ENCODE measurements at regions of chr22 and their contacts with region 1.

Region 1: DNA sequence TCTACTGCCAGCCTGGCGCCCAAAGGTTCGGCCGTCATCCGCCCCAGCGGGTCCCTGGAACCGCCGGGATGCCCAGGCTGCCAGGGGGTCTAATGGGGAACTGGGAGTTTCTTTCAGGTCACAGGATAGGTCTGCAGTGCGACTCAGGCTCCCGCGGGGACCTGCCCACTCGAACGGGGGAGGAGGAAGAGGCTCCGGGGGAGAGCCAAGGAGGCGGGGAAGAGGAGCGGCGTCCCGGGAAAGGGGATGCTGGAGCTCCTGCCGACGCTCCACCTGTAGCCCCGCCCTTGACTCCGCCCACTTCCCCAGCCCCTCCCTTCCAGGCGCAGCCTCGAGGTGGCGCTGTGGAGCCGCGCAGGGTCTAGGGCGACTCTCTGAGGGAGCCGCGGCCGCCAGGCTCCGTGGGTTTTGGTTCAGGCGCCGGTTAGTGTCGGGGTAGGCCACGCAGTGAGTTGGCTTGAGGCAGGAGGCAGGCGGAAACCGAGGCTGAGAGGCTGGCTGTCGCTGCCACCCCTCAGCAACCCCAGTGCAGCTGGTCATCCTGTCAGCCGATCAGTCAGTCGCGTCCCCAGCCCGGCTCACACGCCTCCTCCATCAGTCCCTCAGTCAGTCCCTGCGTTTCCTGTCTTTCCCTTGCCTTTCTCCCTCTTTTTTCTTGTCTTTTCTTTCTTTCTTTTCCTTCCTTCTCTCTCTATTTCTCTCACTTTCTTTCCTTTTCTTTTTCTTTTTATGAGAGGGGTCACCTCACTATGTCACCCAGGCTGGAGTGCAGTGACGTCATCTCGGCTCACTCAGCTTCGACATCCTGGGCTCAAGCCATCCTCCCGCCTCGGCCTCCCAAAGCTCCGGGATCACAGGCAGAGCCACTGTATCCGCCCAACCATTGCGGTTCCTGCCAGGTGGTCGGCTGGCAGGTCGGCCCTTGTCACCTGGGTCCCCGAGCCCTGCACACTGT is 26.4 kb downstream of the YWHAH start:
- DNase-seq: peak; percentile 72 to 89 (median 84)
- H3K4me3 ChIP-seq: peak overlapping the region in 2 of 4 donors; percentile 17 to 41
- H3K27ac ChIP-seq: peak overlapping the region in 1 of 5 donors; percentile 36
- H3K4me1 ChIP-seq: peaks cover 0 to 9% of the 10 kb centered on the region in 2 donors
- H3K27me3 ChIP-seq: no peaks in the 10 kb centered on the region
- CTCF ChIP-seq: peak; percentile 65 to 91 (median 86)
- POLR2A ChIP-seq: no peak

Region 2: DNA sequence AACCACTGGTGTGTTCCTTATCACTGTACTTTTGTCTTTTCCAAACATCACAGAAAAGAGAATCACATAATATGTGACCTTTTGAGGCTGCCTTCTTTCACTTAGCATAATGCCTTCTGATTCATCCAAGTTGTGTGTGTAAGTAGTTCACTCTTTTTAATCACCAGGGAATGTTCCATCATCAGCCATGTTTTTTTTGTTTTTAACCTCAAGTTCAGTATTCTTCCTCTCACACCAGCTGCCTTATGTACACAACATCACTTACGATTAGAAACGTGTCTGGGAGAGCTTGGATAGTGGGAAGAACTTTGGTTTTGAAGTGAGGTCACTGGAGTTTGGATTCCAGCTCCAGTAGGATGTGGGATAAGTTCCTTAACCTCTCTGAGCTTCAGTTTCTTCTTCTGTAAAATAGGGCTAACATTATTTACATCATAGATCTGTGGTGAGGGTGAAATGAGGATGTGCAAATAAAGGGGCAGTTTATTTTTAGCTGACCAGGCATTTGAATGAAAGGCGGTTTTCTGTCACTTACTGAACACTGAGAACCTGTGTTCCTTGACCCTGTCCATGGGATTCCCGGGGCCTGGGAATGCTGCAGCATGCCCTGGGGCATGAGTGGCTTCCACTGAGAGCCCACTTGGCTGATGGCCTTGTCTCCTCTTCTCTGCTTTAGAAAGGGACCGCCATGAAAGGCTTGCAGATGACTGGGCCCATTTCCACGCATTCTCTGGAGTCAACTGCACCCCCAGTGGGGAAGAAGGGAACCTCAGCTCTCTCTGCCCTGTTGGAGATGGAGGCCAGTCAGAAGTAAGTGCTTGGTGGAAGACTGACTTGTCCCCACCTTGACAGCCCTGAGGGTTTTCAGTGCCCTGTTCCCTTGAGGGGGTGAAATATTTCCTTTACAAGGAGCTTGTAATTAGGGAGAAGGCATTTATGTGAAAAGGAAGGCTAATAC is 124.3 kb before region 1 on chr22:
- intact Hi-C with region 1: loop called in 1 of 2 experiments (anchors 10 kb)
- DNase-seq: no peak
- H3K4me3 ChIP-seq: no peak overlapping the region
- H3K27ac ChIP-seq: peak overlapping the region in 1 of 5 donors; percentile 20
- H3K4me1 ChIP-seq: peaks cover 0 to 7% of the 10 kb centered on the region in 2 donors
- H3K27me3 ChIP-seq: no peaks in the 10 kb centered on the region
- CTCF ChIP-seq: peak in 4 of 6 experiments; percentile 8 to 28 (median 26)
- POLR2A ChIP-seq: no peak

Region 3: DNA sequence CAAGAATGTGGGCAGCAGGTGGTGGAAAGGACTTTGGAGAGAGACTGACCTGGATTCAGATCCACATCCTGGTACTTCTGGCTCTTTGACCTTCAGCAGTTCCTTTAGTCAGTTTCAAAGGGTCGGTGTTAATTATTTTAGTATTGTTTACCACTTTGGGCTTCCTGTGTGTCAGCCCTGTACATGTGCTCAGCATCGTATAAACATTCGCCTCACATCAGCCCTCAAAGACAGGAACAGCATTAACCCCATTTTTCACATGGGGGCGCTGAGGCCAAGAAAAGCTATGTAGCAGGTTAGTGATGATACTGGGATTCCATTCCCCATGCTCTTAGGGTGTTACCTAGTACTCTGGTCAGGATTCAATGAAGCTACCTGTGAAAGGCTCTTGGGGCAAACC is 98.6 kb before region 1 on chr22:
- intact Hi-C with region 1: no loop called
- DNase-seq: peak in 1 of 7 donors; percentile 57
- H3K4me3 ChIP-seq: no peak overlapping the region
- H3K27ac ChIP-seq: no peak overlapping the region
- H3K4me1 ChIP-seq: no peaks in the 10 kb centered on the region
- H3K27me3 ChIP-seq: no peaks in the 10 kb centered on the region
- CTCF ChIP-seq: peak in 2 of 6 experiments; percentile 11 to 13
- POLR2A ChIP-seq: no peak

Region 4: GRCh38 chr22:32073823-32074380 is 103.1 kb after region 1 on chr22:
- intact Hi-C with region 1: no loop called
- DNase-seq: no peak
- H3K4me3 ChIP-seq: no peak overlapping the region
- H3K27ac ChIP-seq: no peak overlapping the region
- H3K4me1 ChIP-seq: peaks cover 0 to 2% of the 10 kb centered on the region in 2 donors
- H3K27me3 ChIP-seq: peaks cover 4% of the 10 kb centered on the region
- CTCF ChIP-seq: no peak
- POLR2A ChIP-seq: no peak

Region 5: DNA sequence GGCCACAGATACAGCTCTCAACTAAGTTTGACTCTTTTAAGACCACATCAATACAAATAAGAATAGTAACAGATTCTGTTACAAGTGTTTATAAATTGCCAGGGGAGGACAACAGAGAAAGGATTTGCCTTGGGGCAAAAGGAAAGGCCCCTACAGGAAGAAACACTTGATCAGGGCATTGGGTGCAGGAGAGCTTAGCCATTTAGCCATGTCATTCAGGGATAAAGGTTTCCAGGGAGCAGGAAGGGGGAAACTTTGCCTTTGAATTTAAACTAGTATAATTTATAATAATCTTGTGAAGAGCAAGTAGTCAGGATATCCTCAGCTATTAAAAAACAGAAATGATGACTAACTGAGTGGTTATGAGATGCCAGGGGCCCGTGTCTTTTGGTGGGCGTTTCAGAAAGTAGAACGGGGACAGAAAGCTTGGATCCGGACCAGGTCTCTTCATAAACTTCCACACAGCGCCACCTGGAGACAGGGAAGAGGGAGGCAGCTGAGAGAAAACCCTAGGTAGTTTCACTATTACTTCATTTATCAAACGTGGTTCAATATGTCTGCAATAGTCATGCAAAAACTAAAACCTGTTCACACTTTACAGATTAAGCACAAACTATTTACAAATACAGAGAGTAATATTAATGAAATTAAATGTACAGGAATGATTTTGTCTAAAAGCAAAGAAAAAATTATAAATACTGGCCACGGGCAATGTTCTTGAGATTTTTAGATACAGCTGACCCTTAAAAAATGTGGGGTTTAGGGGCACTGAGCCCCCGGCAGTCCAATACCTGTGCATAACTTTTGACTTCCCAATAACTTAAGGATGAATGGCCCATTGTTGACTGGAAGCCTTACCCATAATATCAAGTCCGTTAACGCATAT is 295.4 kb after region 1 on chr22:
- intact Hi-C with region 1: loop called (anchors 5 to 10 kb)
- DNase-seq: peak; percentile 60 to 82 (median 74)
- H3K4me3 ChIP-seq: no peak overlapping the region
- H3K27ac ChIP-seq: no peak overlapping the region
- H3K4me1 ChIP-seq: peaks cover 0 to 4% of the 10 kb centered on the region in 2 donors
- H3K27me3 ChIP-seq: peaks cover 6% of the 10 kb centered on the region
- CTCF ChIP-seq: peak; percentile 58 to 82 (median 72)
- POLR2A ChIP-seq: no peak